ENCODE measurements at regions of chr7 and their contacts with region 1.

Region 1: DNA sequence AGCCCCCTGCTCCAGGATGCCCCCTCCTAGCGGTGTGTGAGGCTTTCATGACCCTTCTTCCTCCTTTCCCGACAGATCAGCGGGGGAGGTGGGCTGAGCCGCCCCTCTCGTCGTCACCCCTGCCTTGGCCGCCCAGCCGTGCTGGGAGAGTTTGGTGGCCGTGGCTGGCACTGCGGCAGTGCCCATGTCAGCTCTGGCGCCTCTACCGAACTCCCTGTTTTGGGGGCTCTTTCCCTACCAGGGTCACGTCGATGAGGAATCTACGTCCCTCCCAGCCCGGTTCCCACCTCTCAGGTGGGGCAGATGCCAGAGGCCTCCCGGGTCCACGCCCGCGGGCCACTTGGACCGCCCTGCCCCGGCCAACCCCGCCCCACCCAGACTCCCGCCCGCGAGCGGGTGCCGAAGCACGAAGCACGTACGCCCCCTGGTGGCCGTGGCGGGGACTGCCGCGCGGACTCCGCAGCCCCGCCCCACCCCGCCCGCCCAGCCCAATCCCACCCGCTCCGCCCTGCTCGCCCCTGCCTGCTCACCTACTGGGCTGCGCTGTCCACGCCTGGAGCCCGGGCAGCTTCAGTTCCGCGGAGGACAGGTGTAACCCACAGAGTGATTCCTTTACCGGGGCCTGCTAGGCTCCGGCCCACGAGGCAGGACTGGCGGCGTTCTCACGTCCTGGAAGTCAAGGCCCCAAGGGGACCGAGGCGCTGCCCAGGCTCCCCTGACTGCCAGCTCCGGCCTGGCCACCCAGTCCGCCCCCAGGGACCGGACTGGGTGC is 127.1 kb downstream of the UBE2H start:
- DNase-seq: peak; percentile 89
- H3K4me3 ChIP-seq: peak overlapping the region; percentile 83
- H3K27ac ChIP-seq: no peak overlapping the region
- H3K4me1 ChIP-seq: peaks cover 12% of the 10 kb centered on the region
- H3K27me3 ChIP-seq: no peaks in the 10 kb centered on the region

Region 2: DNA sequence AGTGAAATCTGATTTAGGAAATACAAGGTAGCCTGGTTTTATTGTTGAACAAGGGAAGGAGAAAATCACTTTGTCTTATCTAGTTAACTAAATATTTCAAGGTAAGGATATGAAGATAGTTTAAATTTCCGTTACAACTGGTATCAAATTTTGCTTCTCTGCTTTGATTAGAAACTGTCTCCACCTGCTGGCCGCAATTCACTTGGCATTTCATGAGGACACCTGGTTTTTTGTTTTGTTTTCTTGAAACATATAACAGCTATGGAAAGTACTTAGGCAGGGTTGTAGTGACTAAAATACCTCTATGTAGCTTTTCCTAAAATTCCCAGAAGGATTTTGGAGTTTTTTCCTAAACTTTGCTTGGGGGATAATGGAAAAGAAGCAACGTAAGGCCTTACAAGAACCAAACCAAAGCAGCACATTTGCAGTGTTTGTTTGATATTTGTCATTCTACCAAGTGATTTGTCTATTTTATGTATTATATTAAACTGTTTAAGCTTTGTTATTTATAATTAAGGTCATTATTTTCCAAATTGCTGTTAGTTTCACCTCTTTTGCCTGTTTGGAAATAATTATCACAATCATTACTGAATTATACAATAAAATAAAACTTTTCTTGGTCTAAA is 527.3 kb before region 1 on chr7:
- in situ Hi-C with region 1: no loop called
- DNase-seq: peak; percentile 64
- H3K4me3 ChIP-seq: no peak overlapping the region
- H3K27ac ChIP-seq: no peak overlapping the region
- H3K4me1 ChIP-seq: peaks cover 10% of the 10 kb centered on the region
- H3K27me3 ChIP-seq: no peaks in the 10 kb centered on the region

Region 3: DNA sequence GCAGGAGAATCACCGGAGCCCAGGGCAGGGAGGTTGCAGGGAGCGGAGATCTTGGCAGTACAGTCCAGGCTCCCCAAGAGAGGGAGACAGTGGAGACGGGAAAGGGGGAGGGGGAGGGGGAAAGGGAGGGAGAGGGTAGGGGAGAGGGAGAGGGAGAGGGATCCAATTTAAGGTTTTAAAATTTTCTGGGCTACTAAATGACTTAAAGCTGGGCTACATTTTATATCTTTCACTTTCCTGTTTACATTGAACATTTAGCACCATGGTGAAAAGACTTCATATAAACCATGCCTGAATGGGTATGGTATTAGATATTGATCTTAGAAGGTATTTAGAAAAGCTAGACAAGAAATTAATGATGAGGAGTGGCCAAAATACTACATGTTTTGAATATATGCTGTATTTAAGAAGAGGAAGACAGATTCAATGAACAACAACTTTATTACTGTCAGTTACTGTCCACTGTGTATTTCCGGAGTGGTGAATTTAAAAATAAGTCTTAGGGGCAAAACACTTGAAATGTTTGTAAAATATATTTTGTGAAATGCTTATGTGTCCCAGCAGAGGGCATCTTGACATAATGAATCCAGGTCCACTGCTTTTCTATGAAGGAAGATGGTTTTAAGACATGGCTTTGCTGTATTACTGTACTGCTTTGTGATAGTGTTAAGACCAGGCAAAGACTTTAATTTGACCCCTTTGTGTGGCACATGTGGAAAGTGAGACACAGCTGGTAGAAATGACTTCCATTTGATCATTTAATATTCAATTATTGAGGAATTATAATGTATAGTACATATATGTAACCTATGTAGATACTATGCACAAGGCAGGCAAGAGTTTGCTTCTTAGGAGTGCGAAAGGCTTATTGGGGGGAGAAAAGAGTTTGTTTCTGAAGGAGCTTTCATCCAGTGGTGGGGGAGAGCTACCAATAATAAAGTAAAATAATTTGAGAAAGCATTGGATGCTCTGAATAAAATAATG is 161.4 kb before region 1 on chr7:
- in situ Hi-C with region 1: loop called (anchors 10 kb)
- DNase-seq: peak; percentile 86
- H3K4me3 ChIP-seq: no peak overlapping the region
- H3K27ac ChIP-seq: peak overlapping the region; percentile 25; the same call in 1 of the 2 replicates
- H3K4me1 ChIP-seq: peaks cover 11% of the 10 kb centered on the region
- H3K27me3 ChIP-seq: no peaks in the 10 kb centered on the region